H1 (cell line): ENCODE measurements at regions of chr5 and their contacts with region 1.

Region 1: DNA sequence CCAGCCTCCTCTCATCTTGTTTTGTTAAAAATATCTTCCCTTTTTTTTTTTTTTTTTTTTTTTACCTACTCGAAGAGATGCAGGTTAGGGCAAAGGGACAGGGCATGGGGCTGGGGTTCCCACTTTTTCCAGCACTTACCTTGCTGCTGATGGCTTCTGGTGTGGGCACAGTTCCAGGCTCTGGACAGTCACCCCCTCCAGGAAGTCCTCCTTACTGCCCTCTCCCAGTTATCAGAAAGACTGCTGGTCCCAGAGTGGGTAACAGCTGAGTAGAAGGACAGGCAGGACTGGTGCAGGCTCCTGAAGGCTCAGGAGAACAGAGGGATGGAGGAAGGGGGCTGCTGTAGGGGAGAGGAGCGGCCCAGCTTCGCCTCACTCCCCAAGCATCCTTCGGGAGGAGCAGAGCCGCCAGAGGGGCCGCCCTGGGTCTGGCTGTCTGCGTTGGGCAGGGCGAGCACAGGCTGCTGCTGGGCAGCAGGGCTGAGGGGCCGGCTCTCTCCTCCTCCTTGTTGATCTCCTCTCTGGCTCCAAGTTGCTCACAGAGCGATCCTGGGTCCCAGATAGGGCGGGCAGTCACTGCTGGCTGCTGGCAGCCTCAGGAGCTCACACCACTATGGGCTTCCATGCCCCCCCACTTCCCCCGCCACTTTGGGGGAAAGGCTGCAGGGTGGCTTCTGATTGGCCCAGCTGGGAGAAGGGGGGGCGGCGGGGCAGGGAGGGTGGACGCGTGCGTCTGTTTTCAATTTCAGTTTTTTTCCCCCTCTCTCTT is at the start of gene PDGFRB:
- DNase-seq: peak in 1 of 2 experiments; percentile 79
- H3K4me3 ChIP-seq: peak within 1 kb of the TSS; percentile 7 to 50 (median 24); a peak in 6 of 8 replicates
- H3K27ac ChIP-seq: no peak within 1 kb of the TSS
- H3K4me1 ChIP-seq: peaks cover 6 to 27% (median 13%) of the 10 kb centered on the region in 4 experiments
- H3K27me3 ChIP-seq: no peaks in the 10 kb centered on the region; a peak in 2 of 7 replicates
- CTCF ChIP-seq: no peak
- EP300 ChIP-seq: no peak
- POLR2A ChIP-seq: 0 out of 3 replicates have a peak, but pooled peaks of 1 of the 2 experiments have one; percentile 18
- RAD21 ChIP-seq: peak in 1 of 2 experiments; percentile 12; a peak in 1 of 4 replicates
- total RNA-seq, gene PDGFRB: 13.7 and 15.9 TPM in 2 replicates

Region 2: DNA sequence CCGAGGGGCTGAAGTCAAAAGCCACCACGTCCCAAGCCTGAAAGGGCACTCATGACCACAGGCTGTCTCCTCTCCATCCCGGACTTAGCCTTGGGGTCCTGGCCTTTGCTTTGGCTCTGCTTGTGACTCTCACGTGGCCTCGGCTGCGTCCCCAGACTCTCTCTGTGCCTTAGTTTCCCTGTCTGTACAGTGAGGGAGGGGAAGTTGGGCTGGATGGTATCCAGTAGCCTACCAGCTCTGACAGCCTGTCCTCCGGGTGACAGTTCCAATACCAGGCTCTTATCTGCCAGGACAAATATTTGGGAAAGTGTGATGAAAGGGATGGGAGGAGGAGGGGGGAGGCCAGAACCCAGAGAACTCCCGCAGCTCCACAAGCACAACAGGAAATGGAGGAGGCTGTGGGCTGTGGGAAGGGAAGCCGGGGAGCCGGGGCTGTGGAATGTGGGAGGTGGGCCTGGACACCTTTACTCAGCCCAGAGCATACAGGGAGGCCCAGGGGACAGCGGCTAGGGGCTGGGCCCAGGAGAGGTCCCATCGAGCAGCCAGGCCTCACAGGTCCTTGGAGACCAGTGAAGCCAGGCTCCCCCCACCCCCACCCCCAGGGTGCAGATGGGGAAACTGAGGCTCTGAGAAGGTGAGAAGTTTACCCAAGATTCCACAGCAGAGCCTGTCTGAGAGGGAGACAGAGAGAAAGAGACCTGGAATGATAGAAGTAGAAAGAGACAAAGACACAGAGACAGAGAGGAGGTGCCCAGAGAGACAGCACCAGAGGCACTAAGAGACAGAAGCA is 18.1 kb before region 1 on chr5:
- CTCF ChIA-PET with region 1: interaction called, 18 read pairs
- POLR2A ChIA-PET with region 1: interaction called, 14 read pairs
- DNase-seq: no peak
- H3K4me3 ChIP-seq: no peak overlapping the region
- H3K27ac ChIP-seq: no peak overlapping the region
- H3K4me1 ChIP-seq: peaks cover 4 to 32% (median 26%) of the 10 kb centered on the region in 4 experiments
- H3K27me3 ChIP-seq: no peaks in the 10 kb centered on the region; a peak in 3 of 7 replicates
- CTCF ChIP-seq: no peak
- EP300 ChIP-seq: no peak
- POLR2A ChIP-seq: no peak
- RAD21 ChIP-seq: no peak

Region 3: GRCh38 chr5:150143350-150144245 is 11.8 kb before region 1 on chr5:
- CTCF ChIA-PET with region 1: interaction called, 13 read pairs
- POLR2A ChIA-PET with region 1: interaction called, 14 read pairs
- DNase-seq: no peak
- H3K4me3 ChIP-seq: no peak overlapping the region
- H3K27ac ChIP-seq: no peak overlapping the region
- H3K4me1 ChIP-seq: peaks cover 4 to 23% (median 16%) of the 10 kb centered on the region in 4 experiments
- H3K27me3 ChIP-seq: no peaks in the 10 kb centered on the region; a peak in 1 of 7 replicates
- CTCF ChIP-seq: no peak
- EP300 ChIP-seq: no peak
- POLR2A ChIP-seq: no peak
- RAD21 ChIP-seq: no peak